ENCODE measurements at regions of chr9 and their contacts with region 1.

Region 1: DNA sequence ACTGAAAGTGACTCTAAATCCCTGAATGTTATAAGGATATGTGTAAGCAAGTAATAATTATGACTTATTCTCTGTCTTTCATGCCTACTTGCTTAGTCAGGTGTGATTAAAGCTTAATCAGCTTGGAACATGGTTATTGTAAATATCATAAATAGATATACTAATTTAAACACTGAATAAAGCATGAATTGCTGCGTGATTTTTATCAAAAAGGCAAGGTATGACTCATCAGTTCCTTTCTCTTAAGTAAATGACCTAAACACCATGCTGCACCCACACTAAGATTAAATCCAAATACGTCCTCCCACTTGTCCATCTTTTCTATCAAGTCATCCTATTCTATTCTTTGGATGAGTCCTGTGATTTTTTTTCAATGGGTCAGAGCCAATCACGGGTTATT is 124.6 kb upstream of the MTAP start:
- DNase-seq: peak; percentile 99
- ATAC-seq: peak; percentile 86
- H3K4me3 ChIP-seq: peak overlapping the region; percentile 15 to 21; a peak in 3 of 4 replicates
- H3K27ac ChIP-seq: peak overlapping the region; percentile 95
- H3K4me1 ChIP-seq: peaks cover 67% of the 10 kb centered on the region
- H3K27me3 ChIP-seq: no peaks in the 10 kb centered on the region
- CTCF ChIP-seq: no peak

Region 2: GRCh38 chr9:21559424-21560280 is 118.2 kb before region 1 on chr9:
- CTCF ChIA-PET with region 1: no interaction called
- POLR2A ChIA-PET with region 1: no interaction called
- in situ Hi-C with region 1: loop called (anchors 10 kb)
- intact Hi-C with region 1: no loop called
- DNase-seq: no peak
- ATAC-seq: peak; percentile 91
- H3K4me3 ChIP-seq: peak overlapping the region; percentile 74 to 76
- H3K27ac ChIP-seq: peak overlapping the region; percentile 99
- H3K4me1 ChIP-seq: peaks cover 43% of the 10 kb centered on the region
- H3K27me3 ChIP-seq: no peaks in the 10 kb centered on the region
- CTCF ChIP-seq: peak; percentile 23; the same call in 1 of the 2 replicates

Measured in Panc1 (cell line).